Activated CD8-positive, alpha-beta T cell treated with anti-CD3 and anti-CD28 coated beads for 36 hours (primary cell): ENCODE measurements at regions of chr22 and their contacts with region 1.

Region 1: DNA sequence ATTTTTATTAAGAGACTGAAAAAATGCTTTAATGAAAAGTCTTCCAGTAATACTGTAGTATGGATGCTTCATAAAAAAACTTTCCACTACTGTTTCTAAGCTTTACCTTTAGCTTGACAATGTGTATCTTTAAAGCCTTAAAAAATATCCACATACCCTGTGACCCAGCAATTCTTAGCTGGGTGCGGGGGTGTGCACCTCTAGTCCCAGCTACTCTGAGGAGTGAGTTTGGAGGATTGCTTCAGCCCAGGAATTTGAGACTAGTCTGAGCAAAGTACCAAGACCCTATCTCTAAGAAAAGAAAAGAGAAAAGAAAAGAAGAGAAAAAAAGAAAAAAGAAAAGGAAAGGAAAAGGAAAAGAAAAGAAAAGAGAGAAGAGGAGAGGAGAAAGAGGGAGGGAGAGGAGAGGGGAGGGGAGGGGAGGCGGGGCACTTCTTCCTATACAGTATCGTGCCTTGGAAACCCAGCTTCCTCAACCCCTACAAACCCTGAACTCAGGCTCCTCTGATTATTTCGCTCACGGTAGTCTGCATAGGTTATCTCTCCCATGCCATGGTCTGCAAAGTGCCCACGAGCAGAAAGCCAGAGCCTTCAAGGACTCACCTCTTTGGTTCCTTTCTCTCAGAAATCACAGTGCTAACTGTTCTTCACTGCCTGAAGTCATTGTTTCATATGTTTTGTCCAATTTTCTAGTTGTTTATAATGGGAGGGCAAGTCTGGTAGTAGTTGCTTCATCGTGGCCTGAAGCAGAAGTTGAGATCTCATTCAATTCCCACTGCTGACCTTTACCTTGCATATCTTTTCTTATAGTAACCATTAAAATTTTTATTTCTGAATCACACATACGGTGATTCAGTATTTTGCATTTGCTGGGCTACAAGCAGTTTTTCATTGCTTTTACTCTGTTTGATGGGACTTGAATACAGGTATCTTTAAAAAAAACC is 82.2 kb downstream of the FAM83F start:
- DNase-seq: no peak
- ATAC-seq: peak; percentile 57
- H3K4me3 Mint-ChIP-seq: peak overlapping the region; percentile 73
- H3K27ac Mint-ChIP-seq: peak overlapping the region; percentile 88
- H3K4me1 Mint-ChIP-seq: peaks cover 51% of the 10 kb centered on the region
- H3K27me3 Mint-ChIP-seq: no peaks in the 10 kb centered on the region
- CTCF ChIP-seq: no peak

Region 2: DNA sequence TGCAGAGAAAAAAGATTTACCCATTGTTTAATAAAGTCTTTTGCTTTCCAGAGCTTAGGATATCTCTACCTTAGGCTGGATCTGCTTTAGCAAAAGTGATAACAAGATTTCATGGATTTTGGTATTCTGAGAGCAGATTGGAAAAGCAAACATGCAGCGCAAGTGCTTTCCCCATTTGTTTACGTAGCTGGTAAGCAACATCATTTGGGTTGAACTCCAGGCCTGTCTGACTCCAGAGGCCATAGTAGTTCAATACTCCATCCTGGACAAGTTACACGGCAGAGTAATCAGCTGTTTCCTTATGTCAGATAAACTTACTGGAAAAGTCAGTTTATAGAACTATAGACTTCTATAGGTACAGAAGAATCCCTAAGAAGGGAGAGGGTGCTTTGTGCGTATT is 60.2 kb after region 1 on chr22:
- CTCF ChIA-PET with region 1: no interaction called
- POLR2A ChIA-PET with region 1: no interaction called
- intact Hi-C with region 1: no loop called
- DNase-seq: no peak
- ATAC-seq: no peak
- H3K4me3 Mint-ChIP-seq: no peak overlapping the region
- H3K27ac Mint-ChIP-seq: no peak overlapping the region
- H3K4me1 Mint-ChIP-seq: peaks cover 7% of the 10 kb centered on the region
- H3K27me3 Mint-ChIP-seq: no peaks in the 10 kb centered on the region
- CTCF ChIP-seq: no peak

Region 3: GRCh38 chr22:40161194-40161593 is 84.2 kb after region 1 on chr22:
- CTCF ChIA-PET with region 1: no interaction called
- POLR2A ChIA-PET with region 1: no interaction called
- intact Hi-C with region 1: loop called (anchors 5 kb)
- DNase-seq: no peak
- ATAC-seq: no peak
- H3K4me3 Mint-ChIP-seq: no peak overlapping the region
- H3K27ac Mint-ChIP-seq: no peak overlapping the region
- H3K4me1 Mint-ChIP-seq: peaks cover 7% of the 10 kb centered on the region
- H3K27me3 Mint-ChIP-seq: no peaks in the 10 kb centered on the region
- CTCF ChIP-seq: no peak